Heart left ventricle (tissue), 16 donors: ENCODE measurements at regions of chr10 and their contacts with region 1.

Region 1: GRCh38 chr10:114714281-114714741 is 56.2 kb upstream of the ABLIM1 start:
- DNase-seq: peak in 4 of 5 donors; percentile 54 to 73 (median 62)
- ATAC-seq: peak; percentile 76 to 87 (median 82)
- H3K4me3 ChIP-seq: peak overlapping the region in 1 of 12 donors; percentile 4
- H3K27ac ChIP-seq: peak overlapping the region; percentile 64 to 90 (median 82)
- H3K4me1 ChIP-seq: peaks cover 15 to 94% (median 66%) of the 10 kb centered on the region in 12 donors
- H3K27me3 ChIP-seq: no peaks in the 10 kb centered on the region
- CTCF ChIP-seq: no peak
- POLR2A ChIP-seq: no peak

Region 2: GRCh38 chr10:113802997-113803396 is 911.3 kb before region 1 on chr10:
- intact Hi-C with region 1: no loop called
- DNase-seq: no peak
- ATAC-seq: no peak
- H3K4me3 ChIP-seq: no peak overlapping the region
- H3K27ac ChIP-seq: no peak overlapping the region
- H3K4me1 ChIP-seq: peaks cover 0 to 6% (median 0%) of the 10 kb centered on the region in 12 donors
- H3K27me3 ChIP-seq: no peaks in the 10 kb centered on the region
- CTCF ChIP-seq: no peak
- POLR2A ChIP-seq: no peak

Region 3: DNA sequence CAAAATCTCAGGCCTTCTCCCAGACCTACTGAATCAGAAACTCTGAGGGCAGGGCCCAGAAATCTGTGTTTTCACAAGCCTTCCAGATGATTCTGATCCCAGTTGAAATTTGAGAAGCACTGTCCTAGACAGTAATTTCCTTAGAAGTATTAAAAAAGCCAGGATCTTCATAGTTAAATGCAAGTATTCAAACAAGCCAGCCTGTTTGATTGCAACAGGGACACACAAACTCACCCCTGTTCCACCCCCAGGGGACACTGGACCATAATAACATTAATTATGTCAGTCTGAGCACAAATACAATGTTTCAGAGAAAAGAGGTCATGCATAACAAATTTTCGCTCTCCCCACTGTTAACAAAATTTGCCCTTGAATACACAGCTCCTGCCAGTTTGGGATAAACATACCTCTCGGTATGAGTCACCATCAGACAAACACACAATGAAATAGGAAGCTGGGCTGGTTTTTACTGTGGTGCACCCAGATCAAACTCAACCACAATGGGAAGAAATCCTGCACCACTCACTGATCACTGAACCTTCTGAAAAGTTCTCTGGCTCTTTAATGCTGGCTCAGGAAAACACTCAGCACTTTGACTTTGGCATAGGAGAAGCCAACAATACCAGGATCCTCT is 90.5 kb before region 1 on chr10:
- intact Hi-C with region 1: loop called in 1 of 10 experiments (anchors 5 kb)
- DNase-seq: no peak
- ATAC-seq: peak in 3 of 4 donors; percentile 46 to 61 (median 50)
- H3K4me3 ChIP-seq: peak overlapping the region in 2 of 12 donors; percentile 8 to 15
- H3K27ac ChIP-seq: peak overlapping the region; percentile 7 to 91 (median 54)
- H3K4me1 ChIP-seq: peaks cover 14 to 96% (median 59%) of the 10 kb centered on the region in 12 donors
- H3K27me3 ChIP-seq: no peaks in the 10 kb centered on the region
- CTCF ChIP-seq: no peak
- POLR2A ChIP-seq: no peak

Region 4: DNA sequence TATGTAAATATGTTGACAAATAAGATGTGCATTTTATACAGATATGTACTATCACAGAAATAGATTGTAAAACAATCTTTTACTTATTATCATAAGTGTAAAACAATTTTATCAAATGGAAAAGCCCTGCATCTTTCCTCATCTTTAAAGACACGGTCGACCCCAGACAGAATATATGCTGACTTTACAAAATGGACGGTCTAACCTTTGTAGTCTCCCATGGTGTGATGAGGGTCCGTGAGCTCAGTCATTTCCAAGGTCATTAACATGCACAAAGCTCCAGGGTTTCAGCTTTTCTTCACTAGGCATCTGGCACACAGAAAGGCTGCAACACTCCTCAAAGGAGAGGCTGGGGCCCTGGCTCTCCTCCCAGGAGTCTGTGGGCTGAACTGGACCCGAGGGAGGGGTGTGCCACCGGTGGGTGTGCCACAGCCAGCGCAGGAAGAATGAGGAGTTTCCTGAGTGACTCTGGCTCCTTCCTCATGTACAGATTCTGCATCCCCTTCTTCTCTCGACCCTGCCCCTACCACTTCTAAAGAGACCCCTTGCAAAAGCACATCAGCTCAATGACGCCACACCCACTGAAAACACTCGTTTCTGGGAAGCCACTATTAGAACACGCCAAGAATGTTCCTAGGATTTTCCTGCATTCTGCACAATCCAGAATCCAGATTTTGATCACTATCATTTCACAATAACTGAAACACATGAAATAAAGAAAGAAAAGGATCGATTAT is 30.1 kb before region 1 on chr10:
- intact Hi-C with region 1: loop called in 2 of 10 experiments (anchors 2 kb)
- DNase-seq: peak; percentile 48 to 79 (median 72)
- ATAC-seq: peak; percentile 38 to 71 (median 64)
- H3K4me3 ChIP-seq: peak overlapping the region; percentile 21 to 61 (median 54)
- H3K27ac ChIP-seq: peak overlapping the region; percentile 77 to 94 (median 85)
- H3K4me1 ChIP-seq: peaks cover 16 to 87% (median 51%) of the 10 kb centered on the region in 12 donors
- H3K27me3 ChIP-seq: no peaks in the 10 kb centered on the region
- CTCF ChIP-seq: no peak
- POLR2A ChIP-seq: peak in 1 of 2 donors; percentile 21

Region 5: GRCh38 chr10:114754445-114755320 is 40.4 kb after region 1 on chr10:
- intact Hi-C with region 1: loop called in 1 of 10 experiments (anchors 5 kb)
- DNase-seq: no peak
- ATAC-seq: peak in 3 of 4 donors; percentile 10 to 50 (median 41)
- H3K4me3 ChIP-seq: no peak overlapping the region
- H3K27ac ChIP-seq: peak overlapping the region; percentile 17 to 61 (median 48)
- H3K4me1 ChIP-seq: peaks cover 7 to 92% (median 45%) of the 10 kb centered on the region in 12 donors
- H3K27me3 ChIP-seq: no peaks in the 10 kb centered on the region
- CTCF ChIP-seq: no peak
- POLR2A ChIP-seq: no peak

Region 6: GRCh38 chr10:114761205-114762193 is 47.2 kb after region 1 on chr10:
- intact Hi-C with region 1: loop called in 8 of 10 experiments (anchors 5 to 10 kb)
- DNase-seq: no peak
- ATAC-seq: peak in 2 of 4 donors; percentile 35 to 43
- H3K4me3 ChIP-seq: no peak overlapping the region
- H3K27ac ChIP-seq: peak overlapping the region in 10 of 12 donors; percentile 5 to 68 (median 40)
- H3K4me1 ChIP-seq: peaks cover 4 to 90% (median 47%) of the 10 kb centered on the region in 12 donors
- H3K27me3 ChIP-seq: peaks cover 0 to 1% (median 0%) of the 10 kb centered on the region in 9 donors
- CTCF ChIP-seq: no peak
- POLR2A ChIP-seq: no peak

Region 7: GRCh38 chr10:114767101-114767985 is 53.0 kb after region 1 on chr10:
- intact Hi-C with region 1: loop called in 7 of 10 experiments (anchors 5 to 10 kb)
- DNase-seq: peak; percentile 47 to 68 (median 52)
- ATAC-seq: peak in 3 of 4 donors; percentile 77 to 78 (median 77)
- H3K4me3 ChIP-seq: peak overlapping the region; percentile 73 to 97 (median 86)
- H3K27ac ChIP-seq: peak overlapping the region; percentile 79 to 95 (median 92)
- H3K4me1 ChIP-seq: peaks cover 0 to 50% (median 18%) of the 10 kb centered on the region in 12 donors
- H3K27me3 ChIP-seq: peaks cover 0 to 22% (median 0%) of the 10 kb centered on the region in 9 donors
- CTCF ChIP-seq: no peak
- POLR2A ChIP-seq: no peak

Region 8: GRCh38 chr10:114779803-114780609 is 65.7 kb after region 1 on chr10:
- intact Hi-C with region 1: loop called in 3 of 10 experiments (anchors 5 kb)
- DNase-seq: no peak
- ATAC-seq: peak in 2 of 4 donors; percentile 38 to 70
- H3K4me3 ChIP-seq: no peak overlapping the region
- H3K27ac ChIP-seq: peak overlapping the region in 9 of 12 donors; percentile 7 to 50 (median 27)
- H3K4me1 ChIP-seq: peaks cover 0 to 37% (median 11%) of the 10 kb centered on the region in 12 donors
- H3K27me3 ChIP-seq: no peaks in the 10 kb centered on the region
- CTCF ChIP-seq: no peak
- POLR2A ChIP-seq: no peak